Activated CD4-positive, alpha-beta memory T cell treated with anti-CD3 and anti-CD28 coated beads, Interleukin-2, amount 10 ng/mL, durations not matched to agents 7 days and 5 days (primary cell): ENCODE measurements at regions of chr1 and their contacts with region 1.

Region 1: GRCh38 chr1:197521118-197521739 is 253.2 kb downstream of the CRB1 start:
- DNase-seq: no peak
- H3K4me3 Mint-ChIP-seq: no peak overlapping the region
- H3K27ac Mint-ChIP-seq: no peak overlapping the region
- H3K4me1 Mint-ChIP-seq: peaks cover 6% of the 10 kb centered on the region
- H3K27me3 Mint-ChIP-seq: no peaks in the 10 kb centered on the region

Region 2: DNA sequence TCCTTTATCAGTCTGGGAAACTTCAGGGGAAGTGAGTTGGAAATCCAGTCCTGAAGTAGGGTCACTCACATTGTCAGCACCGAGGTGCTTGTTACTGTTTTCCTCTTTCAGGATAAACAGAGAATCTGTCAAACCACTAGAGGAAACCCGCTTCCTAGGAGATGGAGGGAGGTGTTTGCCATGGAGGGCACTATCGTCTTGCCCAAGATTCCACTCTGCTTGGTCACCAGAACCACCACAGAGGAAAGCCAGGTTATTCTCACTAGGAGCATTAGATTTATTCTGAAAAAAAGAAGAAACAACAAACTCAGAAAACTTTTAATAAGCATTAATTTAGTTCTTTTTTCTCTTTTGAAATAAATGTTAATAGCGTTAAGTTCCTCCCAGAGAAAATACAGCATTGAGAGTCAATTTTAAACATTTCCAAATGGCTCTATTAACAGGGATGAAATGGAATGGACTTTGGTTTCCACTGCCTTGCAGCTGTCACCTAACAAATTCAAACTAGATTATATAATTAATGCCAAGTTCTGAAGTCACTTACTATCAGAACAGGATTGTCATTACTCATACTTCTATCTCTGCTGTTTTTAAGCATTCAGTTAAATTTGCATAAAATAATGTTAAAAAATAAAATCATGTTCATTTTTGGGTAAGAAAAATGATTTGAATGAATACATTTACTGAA is 10.4 kb before region 1 on chr1:
- CTCF ChIA-PET with region 1: interaction called, 10 read pairs
- POLR2A ChIA-PET with region 1: no interaction called
- DNase-seq: no peak
- H3K4me3 Mint-ChIP-seq: no peak overlapping the region
- H3K27ac Mint-ChIP-seq: no peak overlapping the region
- H3K4me1 Mint-ChIP-seq: no peaks in the 10 kb centered on the region
- H3K27me3 Mint-ChIP-seq: no peaks in the 10 kb centered on the region